BJ (cell line): ENCODE measurements at regions of chr1 and their contacts with region 1.

Region 1: DNA sequence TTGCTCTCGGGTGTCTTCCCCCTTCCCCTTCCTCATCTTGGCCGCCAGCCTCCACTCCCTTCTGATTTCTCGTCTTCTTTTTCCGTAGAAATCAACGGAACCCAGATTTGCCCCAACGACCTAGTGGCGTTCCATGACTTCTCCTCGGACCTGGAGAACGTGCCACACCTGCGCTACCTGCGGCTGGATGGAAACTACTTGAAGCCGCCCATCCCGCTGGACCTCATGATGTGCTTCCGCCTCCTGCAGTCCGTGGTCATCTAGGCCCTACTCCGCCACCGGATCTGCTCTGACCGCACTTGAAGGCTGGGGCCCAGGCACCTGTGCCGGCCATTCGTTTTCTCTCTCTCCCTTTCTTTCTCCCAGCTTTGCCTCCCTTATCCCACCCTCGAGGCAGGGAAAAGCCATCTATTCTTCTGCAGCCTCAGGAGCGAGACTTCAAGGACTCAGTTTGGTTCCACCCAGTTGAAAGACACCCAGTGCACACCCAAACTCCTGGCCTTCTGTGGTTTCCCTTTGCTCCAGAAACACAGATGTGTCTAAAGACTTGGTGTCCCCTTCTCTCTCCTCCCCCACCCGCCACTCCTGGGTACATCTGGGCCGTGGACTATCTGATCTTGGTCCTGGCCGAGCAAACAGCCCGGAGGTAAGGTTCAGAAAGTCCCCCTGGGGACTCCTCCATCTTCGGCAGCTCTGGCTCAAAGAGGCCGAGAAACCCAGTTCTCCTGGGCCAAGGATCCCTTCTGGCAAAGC is 7.2 kb upstream of the OPTC start:
- DNase-seq: no peak
- H3K4me3 ChIP-seq: no peak overlapping the region
- H3K27me3 ChIP-seq: no peaks in the 10 kb centered on the region
- CTCF ChIP-seq: no peak

Region 2: DNA sequence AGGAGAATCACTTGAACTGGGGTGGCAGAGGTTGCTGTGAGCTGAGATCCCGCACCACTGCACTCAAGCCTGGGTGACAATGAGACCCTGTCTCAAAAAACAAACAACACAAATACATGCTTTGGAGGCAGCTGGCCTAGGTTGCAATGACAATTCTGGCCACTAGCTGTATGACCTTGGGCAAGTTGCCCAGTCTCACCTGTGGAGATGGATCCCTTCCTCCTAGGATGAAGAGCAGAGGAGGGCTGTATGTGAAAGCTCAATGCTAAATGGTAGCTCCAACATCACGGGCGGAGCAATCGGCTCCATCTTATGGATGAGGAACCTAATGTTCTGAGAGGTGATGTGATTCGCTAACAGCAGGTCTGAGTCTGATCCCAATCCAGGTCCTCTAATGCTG is 338.7 kb before region 1 on chr1:
- CTCF ChIA-PET with region 1: no interaction called
- POLR2A ChIA-PET with region 1: no interaction called
- DNase-seq: no peak
- H3K4me3 ChIP-seq: no peak overlapping the region
- H3K27me3 ChIP-seq: no peaks in the 10 kb centered on the region
- CTCF ChIP-seq: 0 out of 2 replicates have a peak, but pooled peaks have one; percentile 19

Region 3: DNA sequence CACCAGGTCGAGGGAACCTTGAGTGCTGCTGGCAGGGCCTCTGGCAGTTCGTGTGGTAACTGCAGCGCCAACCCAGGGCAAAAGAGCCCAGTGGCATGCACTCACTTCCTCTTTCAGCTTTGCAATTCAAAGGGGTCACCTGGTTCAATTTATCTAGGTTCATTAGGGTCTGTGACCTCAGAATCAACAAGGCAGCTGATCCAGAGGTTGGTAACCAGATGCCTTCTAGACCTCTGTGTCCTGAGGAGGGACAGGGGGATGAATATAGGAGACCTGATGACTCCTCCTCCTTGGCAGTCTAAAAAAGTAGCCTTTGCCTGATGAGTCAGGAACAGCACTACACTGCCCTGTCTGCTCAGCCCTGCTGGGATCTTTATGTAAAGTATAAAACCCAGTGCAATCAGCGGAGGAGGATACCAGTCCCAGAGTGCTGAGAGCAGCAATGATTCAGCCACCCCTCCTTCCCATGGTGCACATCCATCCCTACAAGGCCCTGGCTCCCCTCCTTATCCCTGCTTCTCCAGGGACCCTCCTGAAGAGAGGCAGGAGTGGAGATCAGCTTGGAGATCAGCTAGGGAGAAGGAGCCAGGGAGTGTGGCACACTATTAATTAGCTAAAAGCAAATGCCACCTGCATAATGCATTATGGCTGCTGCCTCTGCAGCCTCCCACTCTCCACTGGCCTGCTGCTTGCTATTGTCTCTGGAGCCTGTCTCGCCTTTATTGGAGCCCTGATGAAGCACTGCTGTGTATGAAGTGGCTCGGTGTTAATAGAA is 124.7 kb before region 1 on chr1:
- CTCF ChIA-PET with region 1: interaction called, 47 read pairs
- POLR2A ChIA-PET with region 1: no interaction called
- DNase-seq: no peak
- H3K4me3 ChIP-seq: no peak overlapping the region
- H3K27me3 ChIP-seq: peaks cover 15% of the 10 kb centered on the region
- CTCF ChIP-seq: no peak

Region 4: GRCh38 chr1:203381151-203381751 is 105.5 kb before region 1 on chr1:
- CTCF ChIA-PET with region 1: interaction called, 10 read pairs
- POLR2A ChIA-PET with region 1: no interaction called
- DNase-seq: no peak
- H3K4me3 ChIP-seq: no peak overlapping the region
- H3K27me3 ChIP-seq: peaks cover 10% of the 10 kb centered on the region
- CTCF ChIP-seq: no peak

Region 5: GRCh38 chr1:203450479-203451149 is 36.2 kb before region 1 on chr1:
- CTCF ChIA-PET with region 1: interaction called, 14 read pairs
- POLR2A ChIA-PET with region 1: no interaction called
- DNase-seq: no peak
- H3K4me3 ChIP-seq: no peak overlapping the region
- H3K27me3 ChIP-seq: no peaks in the 10 kb centered on the region
- CTCF ChIP-seq: 0 out of 2 replicates have a peak, but pooled peaks have one; percentile 2

Region 6: DNA sequence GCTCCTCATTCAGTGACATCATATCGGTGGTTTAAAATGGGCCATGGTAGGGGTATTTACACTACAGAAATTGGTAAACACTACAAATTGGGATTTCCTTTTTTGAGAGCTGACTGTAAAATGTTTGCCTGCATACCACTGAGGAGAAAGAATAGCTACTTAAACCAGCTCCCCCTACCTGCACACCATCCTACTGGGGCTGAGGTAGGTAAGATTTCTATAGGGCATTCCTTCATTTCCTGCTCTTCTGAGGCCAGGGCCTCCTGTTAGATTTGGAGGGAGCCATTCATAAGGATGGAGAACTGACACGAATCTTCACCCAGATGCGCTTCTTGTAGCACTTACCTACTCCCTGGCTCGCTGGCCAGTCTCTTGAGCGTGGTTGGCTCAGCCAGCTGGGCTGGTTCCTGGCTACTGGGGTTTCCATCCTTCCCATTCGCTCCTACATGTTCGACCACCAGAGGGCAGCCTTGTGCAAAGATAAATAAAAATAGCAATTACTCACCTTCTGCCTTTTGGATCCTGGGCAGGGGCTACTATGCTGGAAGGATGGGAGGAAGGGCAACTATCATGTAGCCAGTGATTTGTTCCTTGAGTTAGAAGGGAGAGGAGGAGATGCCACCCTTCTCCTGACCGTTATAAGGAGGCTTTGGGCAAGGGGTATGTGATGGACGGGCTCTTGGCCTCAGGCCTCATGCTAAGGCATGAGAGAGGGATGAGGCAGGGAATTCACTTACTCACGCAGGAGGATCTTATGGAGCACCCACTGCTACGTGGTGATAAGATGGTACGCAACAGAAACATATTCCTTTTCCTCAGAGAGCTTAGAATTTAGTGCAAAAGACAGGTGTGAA is 17.8 kb after region 1 on chr1:
- CTCF ChIA-PET with region 1: interaction called, 19 read pairs
- POLR2A ChIA-PET with region 1: no interaction called
- DNase-seq: no peak
- H3K4me3 ChIP-seq: no peak overlapping the region
- H3K27me3 ChIP-seq: no peaks in the 10 kb centered on the region
- CTCF ChIP-seq: peak; percentile 74

Region 7: DNA sequence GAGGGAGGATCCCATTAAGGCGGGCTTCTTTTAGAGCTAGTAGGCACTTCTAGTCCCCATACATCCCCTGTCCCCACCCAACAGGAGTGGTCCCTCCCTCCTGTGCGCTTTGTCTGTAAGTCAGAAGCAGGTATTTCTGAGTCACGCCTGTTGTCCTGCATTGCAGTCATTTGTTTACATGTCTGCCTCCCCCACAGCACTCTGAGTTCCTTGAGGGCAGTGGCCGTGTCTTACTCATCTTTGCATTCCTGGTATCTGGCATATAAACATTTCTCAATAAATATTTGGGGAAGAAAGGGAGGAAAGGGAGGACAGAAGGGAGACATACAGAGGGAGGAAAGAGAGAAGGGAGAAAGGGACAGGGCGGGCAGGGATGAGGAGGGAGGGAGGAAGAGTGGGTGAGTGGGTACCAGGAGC is 832.7 kb after region 1 on chr1:
- CTCF ChIA-PET with region 1: no interaction called
- POLR2A ChIA-PET with region 1: no interaction called
- DNase-seq: peak; percentile 91
- H3K4me3 ChIP-seq: no peak overlapping the region
- H3K27me3 ChIP-seq: no peaks in the 10 kb centered on the region
- CTCF ChIP-seq: no peak